ENCODE measurements at regions of chr9 and their contacts with region 1.

Region 1: DNA sequence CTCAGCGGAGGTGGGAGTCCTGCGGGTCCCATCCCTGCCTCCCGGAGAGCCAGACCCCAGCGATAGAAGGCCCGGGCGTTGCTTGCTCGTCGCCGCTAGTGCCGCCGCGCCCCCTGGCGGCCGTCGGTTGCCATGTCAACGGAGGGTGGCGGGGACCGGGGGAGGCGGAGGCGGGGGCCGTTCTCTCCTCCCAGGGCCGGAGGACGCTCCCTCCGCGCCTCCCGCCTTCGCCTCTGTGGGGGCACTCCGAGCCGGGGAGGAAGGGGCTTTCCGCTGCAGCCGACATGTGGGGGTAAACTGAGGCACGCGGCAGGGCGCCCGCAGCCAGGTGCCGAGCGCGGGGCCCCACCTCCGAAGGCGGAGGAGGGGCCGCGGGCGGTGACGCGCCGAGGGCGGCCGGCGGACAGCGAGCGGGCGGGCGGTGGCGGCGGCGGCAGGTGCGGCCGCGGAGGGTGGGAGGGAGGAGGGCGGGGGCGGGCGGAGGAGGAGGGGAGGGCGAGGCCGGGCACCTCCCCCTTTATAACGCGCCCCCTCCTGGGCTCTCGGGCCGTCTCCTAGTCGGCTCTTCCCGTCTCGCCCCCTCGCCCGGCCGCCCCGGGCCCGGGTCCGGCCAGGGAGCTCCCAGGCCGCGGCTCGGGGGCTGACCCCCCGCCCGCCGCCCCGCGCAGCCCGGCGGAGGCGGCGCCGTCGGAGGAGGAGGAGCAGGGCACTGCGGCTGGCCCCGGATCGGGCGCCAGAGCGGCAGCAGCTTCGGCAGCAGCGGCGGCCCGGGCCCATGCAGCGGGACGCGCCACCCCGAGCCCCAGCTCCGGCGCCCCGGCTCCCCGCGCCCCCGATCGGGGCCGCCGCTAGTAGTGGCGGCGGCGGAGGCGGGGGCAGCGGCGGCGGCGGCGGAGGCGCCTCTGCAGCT is 556 bp upstream of the CDK9 start:
- DNase-seq: peak; percentile 85 to 94 (median 89)
- H3K4me3 ChIP-seq: peak overlapping the region; percentile 52
- H3K4me3 Mint-ChIP-seq: peak overlapping the region; percentile 85 to 97 (median 90)
- H3K27ac ChIP-seq: peak overlapping the region; percentile 64
- H3K27ac Mint-ChIP-seq: peak overlapping the region; percentile 95 to 99 (median 98)
- H3K4me1 ChIP-seq: peaks cover 59% of the 10 kb centered on the region
- H3K4me1 Mint-ChIP-seq: peaks cover 59 to 76% (median 76%) of the 10 kb centered on the region in 3 donors
- H3K27me3 ChIP-seq: no peaks in the 10 kb centered on the region
- H3K27me3 Mint-ChIP-seq: peaks cover 0 to 4% of the 10 kb centered on the region in 2 donors

Region 2: GRCh38 chr9:127707726-127708147 is 77.5 kb before region 1 on chr9:
- CTCF ChIA-PET with region 1: no interaction called
- POLR2A ChIA-PET with region 1: no interaction called
- DNase-seq: peak in 4 of 5 donors; percentile 33 to 73 (median 50)
- H3K4me3 ChIP-seq: no peak overlapping the region
- H3K4me3 Mint-ChIP-seq: peak overlapping the region in 1 of 7 donors; percentile 40
- H3K27ac ChIP-seq: no peak overlapping the region
- H3K27ac Mint-ChIP-seq: peak overlapping the region in 6 of 8 donors; percentile 19 to 62 (median 42)
- H3K4me1 ChIP-seq: peaks cover 13% of the 10 kb centered on the region
- H3K4me1 Mint-ChIP-seq: peaks cover 23 to 29% (median 28%) of the 10 kb centered on the region in 3 donors
- H3K27me3 ChIP-seq: no peaks in the 10 kb centered on the region
- H3K27me3 Mint-ChIP-seq: peaks cover 0 to 3% of the 10 kb centered on the region in 2 donors

Region 3: GRCh38 chr9:127742435-127743088 is 42.7 kb before region 1 on chr9:
- CTCF ChIA-PET with region 1: interaction called, 21 read pairs
- POLR2A ChIA-PET with region 1: interaction called, 7 read pairs
- DNase-seq: no peak
- H3K4me3 ChIP-seq: no peak overlapping the region
- H3K4me3 Mint-ChIP-seq: no peak overlapping the region
- H3K27ac ChIP-seq: no peak overlapping the region
- H3K27ac Mint-ChIP-seq: peak overlapping the region in 1 of 8 donors; percentile 52
- H3K4me1 ChIP-seq: peaks cover 6% of the 10 kb centered on the region
- H3K4me1 Mint-ChIP-seq: peaks cover 6 to 10% (median 8%) of the 10 kb centered on the region in 3 donors
- H3K27me3 ChIP-seq: no peaks in the 10 kb centered on the region
- H3K27me3 Mint-ChIP-seq: no peaks in the 10 kb centered on the region

Region 4: GRCh38 chr9:127763918-127764384 is 21.3 kb before region 1 on chr9:
- CTCF ChIA-PET with region 1: interaction called, 27 read pairs
- POLR2A ChIA-PET with region 1: interaction called, 54 read pairs
- DNase-seq: peak in 1 of 5 donors; percentile 23
- H3K4me3 ChIP-seq: no peak overlapping the region
- H3K4me3 Mint-ChIP-seq: peak overlapping the region in 1 of 7 donors; percentile 64
- H3K27ac ChIP-seq: no peak overlapping the region
- H3K27ac Mint-ChIP-seq: peak overlapping the region; percentile 57 to 94 (median 72)
- H3K4me1 ChIP-seq: peaks cover 58% of the 10 kb centered on the region
- H3K4me1 Mint-ChIP-seq: peaks cover 60 to 80% (median 67%) of the 10 kb centered on the region in 3 donors
- H3K27me3 ChIP-seq: no peaks in the 10 kb centered on the region
- H3K27me3 Mint-ChIP-seq: peaks cover 0 to 3% of the 10 kb centered on the region in 2 donors

Region 5: GRCh38 chr9:127770905-127771569 is 14.2 kb before region 1 on chr9:
- CTCF ChIA-PET with region 1: interaction called, 69 read pairs
- POLR2A ChIA-PET with region 1: interaction called, 54 read pairs
- DNase-seq: peak; percentile 85 to 96 (median 90)
- H3K4me3 ChIP-seq: peak overlapping the region; percentile 71
- H3K4me3 Mint-ChIP-seq: peak overlapping the region; percentile 80 to 96 (median 89)
- H3K27ac ChIP-seq: peak overlapping the region; percentile 77
- H3K27ac Mint-ChIP-seq: peak overlapping the region; percentile 86 to 99 (median 98)
- H3K4me1 ChIP-seq: peaks cover 73% of the 10 kb centered on the region
- H3K4me1 Mint-ChIP-seq: peaks cover 61 to 79% (median 75%) of the 10 kb centered on the region in 3 donors
- H3K27me3 ChIP-seq: no peaks in the 10 kb centered on the region
- H3K27me3 Mint-ChIP-seq: no peaks in the 10 kb centered on the region

Region 6: GRCh38 chr9:127802576-127803443 is 17.5 kb after region 1 on chr9 and contains the start of gene FPGS:
- CTCF ChIA-PET with region 1: interaction called, 6 read pairs
- POLR2A ChIA-PET with region 1: interaction called, 10 read pairs
- DNase-seq: peak; percentile 79 to 91 (median 85)
- H3K4me3 ChIP-seq: peak within 1 kb of the TSS; percentile 97
- H3K4me3 Mint-ChIP-seq: peak within 1 kb of the TSS; percentile 91 to 98 (median 93)
- H3K27ac ChIP-seq: peak within 1 kb of the TSS; percentile 90
- H3K27ac Mint-ChIP-seq: peak within 1 kb of the TSS; percentile 81 to 100 (median 94)
- H3K4me1 ChIP-seq: peaks cover 20% of the 10 kb centered on the region
- H3K4me1 Mint-ChIP-seq: peaks cover 20 to 46% (median 28%) of the 10 kb centered on the region in 3 donors
- H3K27me3 ChIP-seq: no peaks in the 10 kb centered on the region
- H3K27me3 Mint-ChIP-seq: peaks cover 0 to 1% of the 10 kb centered on the region in 2 donors
- total RNA-seq, gene FPGS: 110 to 111 TPM

Region 7: DNA sequence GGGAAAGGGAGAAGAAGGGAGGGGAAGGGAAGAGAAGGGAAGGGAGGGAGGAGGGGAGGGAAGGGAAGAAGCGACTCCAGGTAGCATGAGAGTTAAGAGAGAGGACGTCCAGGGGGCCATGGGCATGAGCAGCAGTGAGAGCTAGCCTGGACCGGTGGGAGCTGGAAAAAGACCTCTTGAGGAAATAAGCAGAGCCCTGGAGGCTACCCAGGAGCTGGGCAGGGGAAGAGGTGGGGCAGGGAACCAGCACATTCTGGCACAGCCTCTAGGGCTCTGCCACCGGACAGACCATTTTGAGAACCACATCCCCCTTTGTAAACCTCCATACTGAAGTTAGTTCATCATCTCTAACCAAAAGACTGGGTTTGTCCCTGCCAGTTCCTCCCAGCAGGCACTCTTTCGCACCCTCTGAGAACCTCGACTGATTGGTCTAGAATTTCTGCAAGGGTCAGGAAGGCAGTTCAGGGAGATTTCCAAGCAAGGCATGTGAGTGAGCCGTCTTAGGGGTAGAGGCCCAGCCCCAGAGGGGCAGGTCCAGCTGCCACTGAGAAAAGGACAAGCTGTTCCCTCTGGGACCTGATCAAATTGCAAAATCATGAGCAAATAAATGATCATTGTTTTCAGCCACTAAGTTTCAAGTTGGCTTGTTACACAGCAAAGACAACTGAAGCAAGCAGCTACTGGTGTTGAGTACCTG is 270.2 kb after region 1 on chr9:
- CTCF ChIA-PET with region 1: no interaction called
- POLR2A ChIA-PET with region 1: no interaction called
- DNase-seq: no peak
- H3K4me3 ChIP-seq: no peak overlapping the region
- H3K4me3 Mint-ChIP-seq: no peak overlapping the region
- H3K27ac ChIP-seq: no peak overlapping the region
- H3K27ac Mint-ChIP-seq: peak overlapping the region in 2 of 8 donors; percentile 17 to 75
- H3K4me1 ChIP-seq: no peaks in the 10 kb centered on the region
- H3K4me1 Mint-ChIP-seq: peaks cover 0 to 4% (median 0%) of the 10 kb centered on the region in 3 donors
- H3K27me3 ChIP-seq: no peaks in the 10 kb centered on the region
- H3K27me3 Mint-ChIP-seq: no peaks in the 10 kb centered on the region

Region 8: DNA sequence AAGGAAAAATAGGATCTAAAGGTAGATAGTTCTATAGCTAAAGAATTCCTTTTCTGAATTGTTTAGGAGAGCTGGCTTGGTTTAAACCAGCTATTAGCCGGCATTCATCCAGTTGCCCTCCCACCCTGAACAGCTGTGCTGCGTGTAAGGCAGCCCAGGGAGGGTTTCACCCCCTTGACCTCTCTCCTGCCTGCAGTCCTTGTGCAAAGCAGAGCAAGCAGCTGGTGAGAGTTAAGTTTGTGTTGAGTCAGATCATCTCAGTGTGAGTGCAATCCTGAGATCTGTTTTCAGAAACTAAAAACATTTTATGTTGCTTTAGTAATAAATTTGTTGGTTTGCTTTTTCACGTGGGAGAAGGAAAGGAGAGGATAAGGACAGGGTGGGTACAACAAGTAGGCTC is 295.8 kb after region 1 on chr9:
- CTCF ChIA-PET with region 1: no interaction called
- POLR2A ChIA-PET with region 1: no interaction called
- DNase-seq: no peak
- H3K4me3 ChIP-seq: no peak overlapping the region
- H3K4me3 Mint-ChIP-seq: no peak overlapping the region
- H3K27ac ChIP-seq: peak overlapping the region; percentile 75
- H3K27ac Mint-ChIP-seq: peak overlapping the region in 7 of 8 donors; percentile 34 to 91 (median 63)
- H3K4me1 ChIP-seq: peaks cover 26% of the 10 kb centered on the region
- H3K4me1 Mint-ChIP-seq: peaks cover 46 to 66% (median 65%) of the 10 kb centered on the region in 3 donors
- H3K27me3 ChIP-seq: no peaks in the 10 kb centered on the region
- H3K27me3 Mint-ChIP-seq: no peaks in the 10 kb centered on the region